ENCODE measurements at regions of chr1 and their contacts with region 1.

Region 1: GRCh38 chr1:23108918-23109533 is 59.6 kb downstream of the LUZP1 start:
- DNase-seq: peak; percentile 66
- H3K4me3 Mint-ChIP-seq: peak overlapping the region; percentile 5
- H3K27ac Mint-ChIP-seq: peak overlapping the region; percentile 82
- H3K4me1 Mint-ChIP-seq: peaks cover 42% of the 10 kb centered on the region
- H3K27me3 Mint-ChIP-seq: no peaks in the 10 kb centered on the region

Region 2: DNA sequence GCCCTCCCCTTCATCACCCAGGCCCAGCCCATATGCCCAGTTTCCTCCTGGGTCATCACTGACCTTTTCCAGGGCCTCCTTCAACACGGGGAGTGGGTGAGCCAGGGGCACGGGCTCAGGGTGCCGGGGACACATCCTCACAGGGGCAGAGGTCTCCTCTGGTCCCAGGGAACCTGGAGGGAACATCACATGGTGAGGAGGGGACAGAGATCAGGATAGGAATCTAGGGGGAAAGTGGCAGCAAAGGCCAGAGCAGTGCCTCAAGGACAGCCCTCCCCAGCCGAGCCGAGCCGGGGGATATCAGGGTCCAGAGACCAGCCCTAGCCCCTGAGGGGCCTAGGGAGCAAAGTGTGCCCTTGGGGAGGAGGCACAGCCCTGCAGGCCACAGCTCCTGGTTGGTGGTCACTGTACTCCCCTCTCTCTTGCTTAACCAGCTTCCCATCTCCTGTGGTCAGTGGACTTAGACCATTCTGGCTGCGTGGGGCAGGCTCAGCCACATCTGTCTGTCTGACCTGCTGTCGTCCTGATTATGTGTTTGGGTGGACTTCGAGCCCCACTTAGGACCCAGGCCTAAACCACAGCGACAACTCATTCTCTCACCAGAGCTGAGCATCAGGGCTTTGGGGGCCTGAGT is 145.9 kb before region 1 on chr1:
- intact Hi-C with region 1: no loop called
- DNase-seq: no peak
- H3K4me3 Mint-ChIP-seq: no peak overlapping the region
- H3K27ac Mint-ChIP-seq: no peak overlapping the region
- H3K4me1 Mint-ChIP-seq: no peaks in the 10 kb centered on the region
- H3K27me3 Mint-ChIP-seq: peaks cover 7% of the 10 kb centered on the region

Region 3: GRCh38 chr1:23039308-23039826 is 69.7 kb before region 1 on chr1:
- intact Hi-C with region 1: no loop called
- DNase-seq: no peak
- H3K4me3 Mint-ChIP-seq: no peak overlapping the region
- H3K27ac Mint-ChIP-seq: no peak overlapping the region
- H3K4me1 Mint-ChIP-seq: peaks cover 24% of the 10 kb centered on the region
- H3K27me3 Mint-ChIP-seq: no peaks in the 10 kb centered on the region

Region 4: DNA sequence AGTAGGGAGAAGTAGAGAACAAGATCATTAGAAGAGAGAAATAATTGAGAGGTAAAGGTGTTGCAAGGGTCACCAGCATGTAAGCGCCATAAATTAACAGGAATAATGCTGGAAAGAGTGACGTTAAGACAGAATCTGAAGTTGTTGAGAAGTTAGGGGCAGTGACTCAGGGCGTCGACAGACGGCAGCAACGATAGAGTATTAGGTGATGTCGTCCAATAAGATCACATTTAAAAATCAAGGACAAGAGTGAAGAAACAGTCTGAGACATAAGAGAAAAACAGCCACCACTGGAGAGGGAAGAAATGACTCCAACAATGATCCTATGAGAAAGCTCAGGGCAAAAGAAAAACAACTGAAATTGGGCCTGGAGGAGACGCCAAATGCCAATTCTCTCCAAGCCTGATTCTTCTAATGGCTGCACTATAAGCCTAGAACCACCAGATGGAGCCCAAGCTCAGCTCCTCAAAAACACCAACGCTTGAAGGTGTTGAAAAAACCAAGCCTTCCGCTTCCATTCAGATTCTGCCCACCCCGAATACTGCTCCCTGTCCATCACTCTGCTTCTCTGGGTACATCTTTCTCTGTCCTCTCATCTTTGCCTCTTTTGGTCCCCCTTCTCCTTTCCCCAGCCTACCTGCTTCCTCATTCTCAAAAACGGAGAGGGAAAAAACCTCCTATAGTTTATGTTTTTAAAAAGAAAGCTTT is 10.4 kb before region 1 on chr1:
- intact Hi-C with region 1: loop called (anchors 1 kb)
- DNase-seq: peak; percentile 88
- H3K4me3 Mint-ChIP-seq: peak overlapping the region; percentile 26
- H3K27ac Mint-ChIP-seq: no peak overlapping the region
- H3K4me1 Mint-ChIP-seq: peaks cover 41% of the 10 kb centered on the region
- H3K27me3 Mint-ChIP-seq: no peaks in the 10 kb centered on the region

Region 5: GRCh38 chr1:23149114-23149513 is 40.1 kb after region 1 on chr1:
- intact Hi-C with region 1: loop called (anchors 1 kb)
- DNase-seq: no peak
- H3K4me3 Mint-ChIP-seq: no peak overlapping the region
- H3K27ac Mint-ChIP-seq: no peak overlapping the region
- H3K4me1 Mint-ChIP-seq: peaks cover 23% of the 10 kb centered on the region
- H3K27me3 Mint-ChIP-seq: no peaks in the 10 kb centered on the region

Region 6: DNA sequence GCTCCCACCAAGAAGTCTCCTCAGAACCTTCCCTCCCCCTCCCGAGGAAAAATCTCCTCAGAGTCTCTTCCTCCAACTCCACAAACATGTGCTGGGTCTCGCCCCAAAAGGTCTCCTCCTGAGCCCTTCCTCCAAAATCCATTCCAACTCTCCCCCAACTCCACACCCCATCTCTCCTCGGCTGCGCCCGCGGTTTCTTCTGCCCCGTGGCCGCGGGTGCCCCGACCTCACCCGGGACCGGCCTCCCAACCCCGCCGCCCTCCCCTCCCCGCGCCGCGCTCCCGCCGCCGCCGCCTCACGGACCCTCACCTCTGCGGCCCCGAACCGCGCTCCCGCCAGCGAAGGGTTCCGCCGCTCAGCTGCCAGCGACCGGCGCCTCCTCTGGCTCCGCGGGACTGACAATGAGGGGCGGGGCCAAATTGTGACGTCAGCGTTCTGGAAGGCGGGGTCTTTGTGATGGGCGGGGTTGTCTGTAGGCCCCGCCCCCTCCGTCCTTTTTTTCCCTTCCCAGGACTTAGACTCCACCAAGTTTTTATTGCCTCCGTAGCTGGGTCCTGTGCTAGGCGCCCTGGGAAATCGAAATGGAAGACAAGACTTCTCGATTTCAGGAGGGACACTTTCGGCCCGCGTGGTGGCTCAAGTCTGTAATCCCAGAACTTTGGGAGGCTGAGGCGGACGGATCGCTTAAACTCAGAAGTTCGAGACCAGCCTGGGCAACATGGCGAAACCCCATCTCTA is 59.6 kb after region 1 on chr1 and contains the start of gene LUZP1:
- intact Hi-C with region 1: loop called (anchors 2 kb)
- DNase-seq: peak; percentile 95
- H3K4me3 Mint-ChIP-seq: peak within 1 kb of the TSS; percentile 97
- H3K27ac Mint-ChIP-seq: peak within 1 kb of the TSS; percentile 91
- H3K4me1 Mint-ChIP-seq: peaks cover 21% of the 10 kb centered on the region
- H3K27me3 Mint-ChIP-seq: peaks cover 2% of the 10 kb centered on the region
- total RNA-seq, gene LUZP1: 21.6 and 23.2 TPM in 2 replicates

Measured in activated CD4-positive, alpha-beta T cell treated with anti-CD3 and anti-CD28 coated beads, Interleukin-2, amount 10 ng/mL, durations not matched to agents 24 days and 14 days (primary cell).